Aorta (tissue), 5 donors: ENCODE measurements at regions of chr7 and their contacts with region 1.

Region 1: GRCh38 chr7:141737834-141738591 is at the start of gene SSBP1:
- DNase-seq: peak; percentile 93 to 94
- ATAC-seq: peak; percentile 97
- H3K4me3 ChIP-seq: peak within 1 kb of the TSS; percentile 51 to 74
- H3K27ac ChIP-seq: peak within 1 kb of the TSS; percentile 19 to 43
- H3K4me1 ChIP-seq: peaks cover 0 to 2% of the 10 kb centered on the region in 2 donors
- H3K27me3 ChIP-seq: no peaks in the 10 kb centered on the region
- total RNA-seq, gene SSBP1: 72.1 to 77.0 TPM

Region 2: GRCh38 chr7:141301544-141301943 is 436.5 kb before region 1 on chr7:
- intact Hi-C with region 1: no loop called
- DNase-seq: no peak
- ATAC-seq: no peak
- H3K4me3 ChIP-seq: no peak overlapping the region
- H3K27ac ChIP-seq: no peak overlapping the region
- H3K4me1 ChIP-seq: no peaks in the 10 kb centered on the region
- H3K27me3 ChIP-seq: peaks cover 0 to 1% of the 10 kb centered on the region in 2 donors

Region 3: DNA sequence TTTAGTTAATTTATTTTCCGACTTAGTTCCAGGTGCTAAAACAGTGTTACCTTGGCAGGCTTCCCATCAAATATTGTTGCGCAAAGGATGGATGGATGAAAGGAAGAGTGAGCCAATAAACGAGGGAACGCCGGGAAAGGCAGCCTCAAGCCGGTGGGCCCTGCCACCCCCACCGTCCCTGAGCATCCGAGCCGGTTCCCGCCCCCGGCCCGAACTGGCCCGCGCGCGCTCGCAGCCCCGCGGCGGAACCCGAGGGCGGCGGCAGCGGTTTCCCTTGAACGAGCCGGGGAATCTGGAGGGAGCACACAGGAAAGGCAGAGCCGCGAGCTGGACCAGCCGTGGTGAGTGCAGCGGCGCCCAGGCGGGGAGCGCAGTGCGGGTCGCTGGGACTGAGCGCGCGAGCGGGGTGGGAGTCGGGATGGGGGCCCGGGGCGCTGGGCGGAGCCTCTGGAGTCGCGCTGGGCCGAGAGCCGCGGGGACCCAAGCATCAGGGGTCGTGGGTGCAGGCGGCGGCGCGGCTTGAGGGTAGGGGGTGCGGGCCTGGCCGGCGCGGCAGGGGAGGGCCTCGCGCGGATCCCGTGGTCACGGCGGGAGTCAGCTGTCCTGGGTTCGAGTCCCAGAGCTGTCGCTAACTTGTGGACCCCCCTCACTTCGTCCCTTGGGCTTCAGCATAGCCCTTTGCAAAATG is 186.8 kb before region 1 on chr7 and contains the start of gene AGK:
- intact Hi-C with region 1: loop called (anchors 2 to 10 kb)
- DNase-seq: peak; percentile 79 to 90
- ATAC-seq: peak; percentile 88
- H3K4me3 ChIP-seq: peak within 1 kb of the TSS; percentile 15 to 82
- H3K27ac ChIP-seq: peak within 1 kb of the TSS in 1 of 2 donors; percentile 6
- H3K4me1 ChIP-seq: no peaks in the 10 kb centered on the region
- H3K27me3 ChIP-seq: no peaks in the 10 kb centered on the region
- total RNA-seq, gene AGK: 21.2 to 29.3 TPM

Region 4: DNA sequence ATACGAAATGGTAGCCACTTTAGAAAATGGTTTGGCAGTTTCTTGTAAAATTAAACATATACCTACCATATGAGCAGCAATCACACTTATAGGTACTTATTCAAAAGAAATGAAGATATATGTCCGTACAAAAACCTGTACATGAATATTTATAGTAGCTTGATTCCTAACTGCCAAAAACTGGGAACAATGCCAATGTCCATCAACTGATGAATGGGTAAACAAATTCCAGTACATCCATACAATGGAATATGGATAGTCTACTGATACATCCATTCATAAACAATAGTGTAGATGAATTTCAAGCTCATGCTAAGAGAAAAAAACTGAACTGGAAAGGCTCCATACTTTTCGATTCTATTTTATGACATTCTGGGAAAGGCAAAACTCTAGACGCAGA is 118.3 kb before region 1 on chr7:
- intact Hi-C with region 1: no loop called
- DNase-seq: no peak
- ATAC-seq: no peak
- H3K4me3 ChIP-seq: no peak overlapping the region
- H3K27ac ChIP-seq: no peak overlapping the region
- H3K4me1 ChIP-seq: no peaks in the 10 kb centered on the region
- H3K27me3 ChIP-seq: no peaks in the 10 kb centered on the region

Region 5: GRCh38 chr7:141654551-141654950 is 83.5 kb before region 1 on chr7:
- intact Hi-C with region 1: loop called in 1 of 2 experiments (anchors 5 kb)
- DNase-seq: peak; percentile 34 to 68
- ATAC-seq: peak; percentile 76
- H3K4me3 ChIP-seq: no peak overlapping the region
- H3K27ac ChIP-seq: peak overlapping the region in 1 of 2 donors; percentile 5
- H3K4me1 ChIP-seq: no peaks in the 10 kb centered on the region
- H3K27me3 ChIP-seq: no peaks in the 10 kb centered on the region

Region 6: GRCh38 chr7:141701489-141702046 is 36.4 kb before region 1 on chr7:
- intact Hi-C with region 1: loop called (anchors 2 to 5 kb)
- DNase-seq: peak; percentile 66 to 78
- ATAC-seq: peak; percentile 57
- H3K4me3 ChIP-seq: peak overlapping the region; percentile 99 to 100
- H3K27ac ChIP-seq: peak overlapping the region; percentile 23 to 95
- H3K4me1 ChIP-seq: peaks cover 3 to 10% of the 10 kb centered on the region in 2 donors
- H3K27me3 ChIP-seq: no peaks in the 10 kb centered on the region